Heart left ventricle (tissue), 16 donors: ENCODE measurements at regions of chr9 and their contacts with region 1.

Region 1: GRCh38 chr9:113648586-113649453 is 185.3 kb downstream of the RGS3 start:
- DNase-seq: peak; percentile 81 to 89 (median 88)
- ATAC-seq: peak; percentile 87 to 93 (median 92)
- H3K4me3 ChIP-seq: no peak overlapping the region
- H3K27ac ChIP-seq: peak overlapping the region in 8 of 12 donors; percentile 26 to 79 (median 62)
- H3K4me1 ChIP-seq: peaks cover 0 to 44% (median 22%) of the 10 kb centered on the region in 12 donors
- H3K27me3 ChIP-seq: no peaks in the 10 kb centered on the region
- CTCF ChIP-seq: peak in 2 of 12 donors; percentile 20 to 26
- POLR2A ChIP-seq: no peak

Region 2: DNA sequence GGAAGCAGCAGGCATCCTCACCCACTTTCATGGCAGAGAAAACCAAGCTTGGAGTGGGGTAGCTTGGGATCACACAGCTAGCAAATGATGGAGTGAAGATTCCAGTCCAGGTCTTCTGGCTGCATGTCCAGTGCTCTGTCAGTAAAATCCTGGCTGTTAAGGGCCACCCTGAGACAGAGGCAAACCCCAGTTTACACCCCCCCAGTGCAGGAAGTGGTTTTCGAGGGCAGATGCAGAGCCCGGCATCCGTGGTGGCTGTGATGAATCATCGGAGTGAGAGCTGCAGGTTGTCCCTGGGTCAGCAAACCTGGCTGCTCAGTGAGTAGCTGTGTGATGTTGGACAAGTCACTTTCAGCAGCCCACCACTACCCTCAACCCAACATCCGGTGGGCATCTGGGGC is 69.9 kb before region 1 on chr9:
- intact Hi-C with region 1: no loop called
- DNase-seq: peak in 2 of 5 donors; percentile 77 to 80
- ATAC-seq: peak in 2 of 4 donors; percentile 5 to 11
- H3K4me3 ChIP-seq: no peak overlapping the region
- H3K27ac ChIP-seq: peak overlapping the region in 11 of 12 donors; percentile 78 to 99 (median 85)
- H3K4me1 ChIP-seq: peaks cover 19 to 95% (median 74%) of the 10 kb centered on the region in 12 donors
- H3K27me3 ChIP-seq: no peaks in the 10 kb centered on the region
- CTCF ChIP-seq: no peak
- POLR2A ChIP-seq: no peak

Region 3: GRCh38 chr9:113614843-113615648 is 33.8 kb before region 1 on chr9:
- intact Hi-C with region 1: loop called in 3 of 10 experiments (anchors 2 to 5 kb)
- DNase-seq: peak; percentile 66 to 77 (median 74)
- ATAC-seq: peak; percentile 32 to 78 (median 69)
- H3K4me3 ChIP-seq: peak overlapping the region in 1 of 12 donors; percentile 15
- H3K27ac ChIP-seq: peak overlapping the region; percentile 17 to 93 (median 70)
- H3K4me1 ChIP-seq: peaks cover 12 to 91% (median 57%) of the 10 kb centered on the region in 12 donors
- H3K27me3 ChIP-seq: no peaks in the 10 kb centered on the region
- CTCF ChIP-seq: no peak
- POLR2A ChIP-seq: no peak

Region 4: DNA sequence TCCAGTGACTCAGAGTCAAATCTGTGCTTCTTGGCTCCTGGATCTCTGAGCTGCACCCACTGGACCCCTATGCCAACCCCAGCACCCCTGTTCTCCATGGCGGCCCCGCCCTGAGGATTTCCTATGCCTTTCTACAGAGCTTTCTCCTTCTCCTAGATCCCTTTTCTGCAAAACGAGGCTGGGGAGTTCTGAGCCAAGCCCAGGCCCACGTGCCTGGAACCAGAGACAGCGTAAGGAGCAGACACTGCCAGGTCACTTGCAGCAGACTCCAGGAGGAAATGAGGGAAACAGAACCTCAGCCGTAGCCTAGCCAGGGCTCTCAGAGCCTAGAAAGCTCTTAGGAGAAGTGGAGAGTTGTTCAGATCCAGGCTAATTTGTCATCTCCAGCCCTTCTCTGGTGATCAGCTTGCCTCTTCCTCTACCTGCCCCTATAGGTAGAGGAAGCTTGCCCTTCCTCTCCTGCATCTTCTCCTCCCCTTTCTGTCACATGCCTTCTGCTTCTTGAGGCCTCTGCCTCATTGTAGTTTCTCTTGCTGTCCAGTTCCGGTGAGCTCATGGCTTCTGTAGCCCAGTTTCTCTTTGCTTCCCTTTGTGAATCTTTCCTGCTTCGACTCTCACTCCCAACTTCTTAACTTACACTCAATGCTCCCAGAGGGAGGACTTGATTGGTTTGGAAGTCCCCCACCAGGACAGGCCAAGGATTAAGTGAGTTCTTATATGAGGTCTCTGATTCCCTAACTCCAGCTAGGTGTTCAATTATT is 21.9 kb before region 1 on chr9:
- intact Hi-C with region 1: loop called in 1 of 10 experiments (anchors 2 kb)
- DNase-seq: peak; percentile 54 to 69 (median 68)
- ATAC-seq: peak; percentile 38 to 73 (median 61)
- H3K4me3 ChIP-seq: no peak overlapping the region
- H3K27ac ChIP-seq: peak overlapping the region in 9 of 12 donors; percentile 18 to 74 (median 65)
- H3K4me1 ChIP-seq: peaks cover 0 to 52% (median 32%) of the 10 kb centered on the region in 12 donors
- H3K27me3 ChIP-seq: no peaks in the 10 kb centered on the region
- CTCF ChIP-seq: no peak
- POLR2A ChIP-seq: no peak

Region 5: GRCh38 chr9:114430457-114430856 is 781.6 kb after region 1 on chr9:
- intact Hi-C with region 1: no loop called
- DNase-seq: no peak
- ATAC-seq: no peak
- H3K4me3 ChIP-seq: no peak overlapping the region
- H3K27ac ChIP-seq: no peak overlapping the region
- H3K4me1 ChIP-seq: no peaks in the 10 kb centered on the region
- H3K27me3 ChIP-seq: peaks cover 0 to 12% (median 0%) of the 10 kb centered on the region in 9 donors
- CTCF ChIP-seq: no peak
- POLR2A ChIP-seq: no peak